ENCODE measurements at regions of chr16 and their contacts with region 1.

Region 1: GRCh38 chr16:68040507-68041288 is 17.6 kb downstream of the DUS2 start:
- DNase-seq: peak; percentile 77 to 85
- H3K4me3 ChIP-seq: no peak overlapping the region
- H3K27ac ChIP-seq: no peak overlapping the region
- H3K4me1 ChIP-seq: no peaks in the 10 kb centered on the region
- H3K27me3 ChIP-seq: no peaks in the 10 kb centered on the region
- CTCF ChIP-seq: peak; percentile 79 to 82

Region 2: DNA sequence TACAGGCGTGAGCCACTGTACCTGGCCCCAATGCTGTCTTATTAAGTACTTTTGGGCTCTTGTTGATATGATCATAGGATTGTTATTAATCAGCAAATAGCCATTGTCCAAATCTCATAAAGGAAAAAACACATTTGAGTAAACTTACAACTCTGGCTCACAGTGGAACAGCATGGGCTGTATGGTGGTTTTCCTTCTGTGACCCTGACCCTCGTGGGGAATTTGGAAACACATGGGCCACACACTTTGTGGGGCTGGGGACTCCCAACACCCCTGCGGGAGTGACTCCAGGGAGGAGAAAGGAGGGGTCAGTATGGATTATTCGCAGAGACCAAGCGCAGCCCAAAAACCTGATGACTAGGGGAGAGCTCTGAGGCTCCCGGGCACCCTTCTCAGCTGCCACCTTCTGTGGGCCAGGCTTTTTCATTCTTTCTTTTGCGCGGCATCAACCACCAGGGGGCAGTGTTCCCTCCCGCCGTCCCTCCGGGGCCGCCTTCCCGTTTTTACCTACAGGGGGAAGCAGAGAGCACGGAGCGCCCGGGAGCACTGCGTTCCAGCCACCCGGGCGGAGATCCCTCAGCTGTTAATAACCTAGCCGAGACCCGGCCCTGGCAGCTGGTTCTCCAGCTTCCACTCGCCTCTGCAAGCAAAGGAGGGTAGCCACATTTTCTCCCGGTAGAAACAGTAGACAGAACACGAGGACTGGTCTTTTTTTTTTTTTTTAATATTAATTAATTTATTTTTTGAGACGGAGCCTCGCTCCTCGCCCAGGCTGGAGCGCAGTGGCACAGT is 224.3 kb before region 1 on chr16:
- intact Hi-C with region 1: loop called (anchors 5 kb)
- DNase-seq: peak; percentile 71 to 89
- H3K4me3 ChIP-seq: no peak overlapping the region
- H3K27ac ChIP-seq: peak overlapping the region in 1 of 2 donors; percentile 38
- H3K4me1 ChIP-seq: peaks cover 0 to 6% (median 2%) of the 10 kb centered on the region in 4 donors
- H3K27me3 ChIP-seq: no peaks in the 10 kb centered on the region
- CTCF ChIP-seq: peak; percentile 100

Region 3: DNA sequence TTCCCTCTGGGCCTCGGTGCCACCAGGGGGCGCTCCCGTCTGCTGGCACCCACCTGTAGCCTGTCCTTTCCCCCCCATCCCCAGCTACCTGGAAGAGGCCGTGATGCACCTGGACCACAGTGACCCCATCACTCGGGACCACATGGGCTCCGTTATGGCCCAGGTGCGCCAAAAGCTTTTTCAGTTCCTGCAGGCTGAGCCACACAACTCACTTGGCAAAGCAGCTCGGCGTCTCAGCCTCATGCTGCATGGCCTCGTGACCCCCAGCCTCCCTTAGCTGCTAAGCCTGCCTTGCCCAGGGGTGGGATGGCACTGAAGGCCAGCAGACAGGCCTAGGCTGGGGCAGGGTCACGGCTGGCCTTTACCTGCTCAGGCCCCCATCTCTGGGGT is 156.8 kb before region 1 on chr16:
- intact Hi-C with region 1: loop called (anchors 5 kb)
- DNase-seq: peak; percentile 47 to 76
- H3K4me3 ChIP-seq: no peak overlapping the region
- H3K27ac ChIP-seq: peak overlapping the region; percentile 66
- H3K4me1 ChIP-seq: peaks cover 0 to 23% (median 11%) of the 10 kb centered on the region in 4 donors
- H3K27me3 ChIP-seq: no peaks in the 10 kb centered on the region
- CTCF ChIP-seq: peak; percentile 89 to 92

Region 4: GRCh38 chr16:67993189-67994039 is 47.3 kb before region 1 on chr16:
- intact Hi-C with region 1: loop called (anchors 5 kb)
- DNase-seq: peak; percentile 67 to 84
- H3K4me3 ChIP-seq: peak overlapping the region; percentile 20 to 50
- H3K27ac ChIP-seq: peak overlapping the region; percentile 24 to 31
- H3K4me1 ChIP-seq: peaks cover 0 to 12% (median 9%) of the 10 kb centered on the region in 4 donors
- H3K27me3 ChIP-seq: no peaks in the 10 kb centered on the region
- CTCF ChIP-seq: peak; percentile 97 to 99

Region 5: DNA sequence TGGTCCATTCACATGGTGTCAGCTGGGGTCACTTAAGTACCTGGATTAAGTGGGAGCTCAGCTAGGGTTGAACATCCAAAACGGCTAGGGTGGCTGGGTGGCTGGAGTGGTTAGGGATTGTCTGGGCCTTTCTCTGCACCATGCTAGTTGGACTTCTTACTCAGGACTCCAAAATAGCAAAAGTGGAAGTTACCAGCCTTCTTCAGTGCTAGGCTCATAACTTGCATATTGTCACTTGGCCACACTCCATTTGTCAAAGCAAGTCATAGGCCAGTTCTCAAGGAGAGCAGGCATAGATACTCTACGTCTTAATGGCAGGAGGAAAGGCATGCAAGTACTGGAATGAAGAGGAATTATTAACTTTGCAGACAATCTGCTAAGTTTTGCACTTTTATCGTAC is 125.6 kb after region 1 on chr16:
- intact Hi-C with region 1: no loop called
- DNase-seq: no peak
- H3K4me3 ChIP-seq: no peak overlapping the region
- H3K27ac ChIP-seq: no peak overlapping the region
- H3K4me1 ChIP-seq: no peaks in the 10 kb centered on the region
- H3K27me3 ChIP-seq: no peaks in the 10 kb centered on the region
- CTCF ChIP-seq: no peak

Region 6: DNA sequence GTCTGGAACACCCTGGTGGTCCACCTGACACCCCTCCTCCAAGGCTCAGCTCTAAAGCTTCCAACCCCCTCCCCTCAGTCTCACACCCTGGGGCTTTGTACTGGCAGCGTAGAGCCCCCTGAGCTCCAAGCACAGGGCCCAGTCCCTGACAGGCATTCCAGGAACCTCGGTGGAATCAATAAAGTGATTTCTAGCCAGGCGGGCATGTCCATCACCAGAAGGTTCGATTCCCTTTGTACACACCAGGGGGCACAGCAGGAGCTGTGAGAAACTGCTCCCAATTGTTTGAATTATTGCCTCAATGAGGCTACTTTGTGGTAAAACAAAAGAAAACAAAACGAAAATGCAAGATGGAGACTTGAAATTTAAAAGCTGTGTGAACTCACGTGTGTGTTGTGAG is 355.8 kb after region 1 on chr16:
- intact Hi-C with region 1: no loop called
- DNase-seq: no peak
- H3K4me3 ChIP-seq: no peak overlapping the region
- H3K27ac ChIP-seq: no peak overlapping the region
- H3K4me1 ChIP-seq: no peaks in the 10 kb centered on the region
- H3K27me3 ChIP-seq: peaks cover 0 to 13% of the 10 kb centered on the region in 2 donors
- CTCF ChIP-seq: peak in 1 of 2 experiments; percentile 29